Caco-2 (cell line): ENCODE measurements at regions of chr18 and their contacts with region 1.

Region 1: DNA sequence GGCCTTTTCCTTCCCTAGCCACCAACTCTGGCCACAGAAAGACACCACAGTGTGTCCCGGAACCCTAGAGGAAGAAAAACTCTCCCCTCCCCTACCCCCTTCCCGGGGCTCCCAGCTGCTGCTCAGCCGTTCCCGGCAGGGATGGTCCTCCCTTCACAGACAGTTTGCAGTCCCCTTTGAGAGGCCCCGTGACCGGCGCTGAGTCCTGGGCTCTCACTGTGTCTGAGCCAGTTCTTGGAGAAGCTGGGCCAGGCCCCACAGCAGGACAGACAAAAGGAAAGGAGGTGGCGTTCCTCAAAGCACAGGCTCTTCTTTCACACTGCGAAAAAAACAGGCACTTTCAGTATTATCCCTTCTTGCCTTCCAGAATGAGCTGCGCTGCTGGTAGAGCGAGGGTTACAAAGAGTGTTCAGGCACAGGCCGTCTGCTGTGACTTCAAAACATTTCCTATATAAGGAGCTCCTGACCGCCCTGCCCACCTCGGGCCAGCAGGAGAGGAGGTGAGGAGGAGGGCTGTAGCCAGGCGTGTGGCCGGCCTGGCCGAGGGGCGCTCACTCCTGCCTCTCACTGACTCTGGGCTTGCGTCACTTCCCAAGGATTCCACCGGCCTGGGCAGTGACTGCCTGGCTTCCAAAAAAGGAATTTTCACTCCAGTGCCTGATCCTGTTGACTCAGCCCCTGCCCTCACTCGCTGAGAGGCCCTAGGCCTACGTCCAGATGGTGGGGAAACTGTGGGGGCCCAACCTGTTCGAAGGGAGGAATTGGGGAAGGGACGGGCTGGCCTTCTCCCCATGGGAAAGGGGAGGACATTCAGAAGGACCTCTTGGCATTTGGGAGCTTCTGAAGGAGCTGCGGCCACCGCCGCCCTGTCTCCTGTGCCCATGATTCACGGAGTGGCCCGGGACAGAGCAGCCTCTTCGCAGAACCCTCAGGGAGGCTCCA is 24.9 kb downstream of the CIDEA start:
- DNase-seq: peak; percentile 86 to 90
- H3K4me3 ChIP-seq: peak overlapping the region; percentile 15
- H3K4me3 Mint-ChIP-seq: peak overlapping the region; percentile 60
- H3K27ac Mint-ChIP-seq: peak overlapping the region; percentile 95
- H3K4me1 ChIP-seq: peaks cover 32% of the 10 kb centered on the region
- H3K4me1 Mint-ChIP-seq: peaks cover 10% of the 10 kb centered on the region
- H3K27me3 ChIP-seq: no peaks in the 10 kb centered on the region
- H3K27me3 Mint-ChIP-seq: no peaks in the 10 kb centered on the region
- CTCF ChIP-seq: peak in 1 of 2 experiments; percentile 28

Region 2: DNA sequence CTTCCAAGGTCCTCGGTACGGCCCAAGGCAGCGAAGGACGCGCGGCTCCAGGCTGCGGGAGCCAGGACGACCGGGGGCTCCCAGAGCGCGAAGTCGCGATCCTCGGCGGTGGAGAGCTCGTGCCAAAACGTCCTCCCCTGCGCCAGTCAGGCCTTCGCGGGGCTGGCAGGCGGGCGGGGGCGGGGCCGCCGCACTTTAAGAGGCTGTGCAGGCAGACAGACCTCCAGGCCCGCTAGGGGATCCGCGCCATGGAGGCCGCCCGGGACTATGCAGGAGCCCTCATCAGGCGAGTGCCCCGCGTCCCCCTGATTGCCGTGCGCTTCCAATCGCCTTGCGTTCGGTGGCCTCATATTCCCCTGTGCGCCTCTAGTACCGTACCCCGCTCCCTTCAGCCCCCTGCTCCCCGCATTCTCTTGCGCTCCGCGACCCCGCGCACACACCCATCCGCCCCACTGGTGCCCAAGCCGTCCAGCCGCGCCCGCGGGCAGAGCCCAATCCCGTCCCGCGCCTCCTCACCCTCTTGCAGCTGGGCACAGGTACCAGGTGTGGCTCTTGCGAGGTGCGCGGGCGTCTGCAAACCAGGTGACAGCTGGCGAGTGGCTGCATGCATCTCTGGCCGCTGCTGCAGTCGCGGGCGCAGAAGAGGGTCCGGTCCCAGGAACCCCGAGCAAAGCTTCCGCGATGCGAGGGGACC is 24.7 kb before region 1 on chr18 and contains the start of gene CIDEA:
- CTCF ChIA-PET with region 1: no interaction called
- POLR2A ChIA-PET with region 1: no interaction called
- intact Hi-C with region 1: no loop called
- DNase-seq: no peak
- H3K4me3 ChIP-seq: no peak within 1 kb of the TSS
- H3K4me3 Mint-ChIP-seq: no peak within 1 kb of the TSS
- H3K27ac Mint-ChIP-seq: peak within 1 kb of the TSS; percentile 14
- H3K4me1 ChIP-seq: peaks cover 17% of the 10 kb centered on the region
- H3K4me1 Mint-ChIP-seq: no peaks in the 10 kb centered on the region
- H3K27me3 ChIP-seq: no peaks in the 10 kb centered on the region; the same call in 1 of the 2 replicates
- H3K27me3 Mint-ChIP-seq: no peaks in the 10 kb centered on the region
- CTCF ChIP-seq: no peak
- total RNA-seq, gene CIDEA: not detected in 2 replicates

Region 3: GRCh38 chr18:12336875-12337274 is 57.9 kb after region 1 on chr18:
- CTCF ChIA-PET with region 1: no interaction called
- POLR2A ChIA-PET with region 1: no interaction called
- intact Hi-C with region 1: loop called (anchors 1 kb)
- DNase-seq: peak; percentile 68 to 72
- H3K4me3 ChIP-seq: no peak overlapping the region
- H3K4me3 Mint-ChIP-seq: peak overlapping the region; percentile 23
- H3K27ac Mint-ChIP-seq: peak overlapping the region; percentile 37
- H3K4me1 ChIP-seq: peaks cover 46% of the 10 kb centered on the region
- H3K4me1 Mint-ChIP-seq: peaks cover 37% of the 10 kb centered on the region
- H3K27me3 ChIP-seq: no peaks in the 10 kb centered on the region
- H3K27me3 Mint-ChIP-seq: no peaks in the 10 kb centered on the region
- CTCF ChIP-seq: no peak